ENCODE measurements at regions of chr15 and their contacts with region 1.

Region 1: DNA sequence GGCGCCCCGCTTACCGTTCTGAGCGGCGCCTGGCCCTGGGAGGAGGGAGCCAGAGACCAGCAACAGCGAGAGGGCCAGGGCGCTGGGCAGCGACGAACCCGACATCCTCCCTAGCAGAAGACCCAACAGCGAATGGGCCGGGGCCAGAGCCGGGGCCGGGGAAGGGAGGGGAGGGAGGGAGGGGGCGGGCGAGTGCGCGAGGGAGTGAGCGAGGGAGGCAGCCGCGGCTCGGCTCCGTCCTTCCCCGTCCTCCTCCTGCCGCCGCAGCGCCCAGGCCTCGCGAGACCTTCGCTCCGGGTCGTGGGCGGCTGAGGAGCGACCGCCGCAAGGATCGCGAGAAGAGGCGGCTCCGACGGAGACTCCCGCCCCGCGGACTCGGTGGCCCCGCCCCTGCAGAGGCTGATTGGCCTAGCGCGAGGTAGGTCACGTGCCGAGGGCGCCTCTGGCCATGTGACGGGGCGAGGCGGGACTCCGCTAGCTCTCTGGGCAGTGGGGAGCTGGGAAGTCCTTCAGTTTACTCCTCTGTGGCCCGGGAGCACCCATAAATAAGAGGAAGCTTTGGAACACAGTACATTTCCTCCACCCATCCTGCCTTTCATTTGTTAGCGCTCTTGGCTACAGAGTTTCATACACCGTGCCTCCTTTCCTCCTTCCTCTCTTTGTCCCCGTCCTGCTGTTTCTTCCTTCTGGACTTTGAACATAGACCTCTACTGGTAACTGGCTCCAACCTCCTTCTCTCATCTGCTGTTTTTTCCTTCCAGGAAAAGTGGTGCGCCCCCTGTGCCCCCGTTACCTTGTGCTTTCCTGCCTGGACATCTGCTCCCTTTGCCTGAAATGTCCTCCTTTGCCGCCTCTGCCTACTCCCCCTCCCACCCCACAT is at the start of gene NPTN:
- DNase-seq: peak; percentile 99
- H3K4me3 Mint-ChIP-seq: peak within 1 kb of the TSS; percentile 83
- H3K27ac Mint-ChIP-seq: peak within 1 kb of the TSS; percentile 52
- H3K4me1 Mint-ChIP-seq: peaks cover 47% of the 10 kb centered on the region
- H3K27me3 Mint-ChIP-seq: peaks cover 10% of the 10 kb centered on the region
- total RNA-seq, gene NPTN: 46.7 to 49.8 TPM

Region 2: GRCh38 chr15:73284090-73284716 is 349.1 kb before region 1 on chr15:
- CTCF ChIA-PET with region 1: interaction called, 8 read pairs
- POLR2A ChIA-PET with region 1: no interaction called
- intact Hi-C with region 1: loop called (anchors 10 kb)
- DNase-seq: no peak
- H3K4me3 Mint-ChIP-seq: no peak overlapping the region
- H3K27ac Mint-ChIP-seq: no peak overlapping the region
- H3K4me1 Mint-ChIP-seq: peaks cover 13% of the 10 kb centered on the region
- H3K27me3 Mint-ChIP-seq: no peaks in the 10 kb centered on the region

Region 3: DNA sequence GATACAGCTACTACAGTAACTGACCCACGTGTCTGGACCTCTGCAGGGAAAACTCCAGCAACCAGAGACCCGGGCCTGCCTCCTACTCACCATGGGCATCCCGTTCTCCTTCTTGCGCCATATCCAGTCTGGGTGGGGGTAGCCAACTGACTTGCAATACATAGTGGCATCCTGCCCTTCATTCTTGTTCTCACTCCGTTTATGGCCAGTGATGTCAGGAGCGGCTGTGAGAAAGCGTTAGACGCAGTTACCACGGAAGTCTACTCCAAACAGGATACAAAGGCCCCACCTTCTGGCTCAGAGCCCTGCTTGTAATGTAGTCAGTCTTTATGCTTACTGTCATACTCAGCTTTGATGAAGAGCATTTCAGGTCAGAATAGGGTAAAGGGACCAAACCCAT is 59.8 kb before region 1 on chr15:
- CTCF ChIA-PET with region 1: interaction called, 25 read pairs
- POLR2A ChIA-PET with region 1: no interaction called
- intact Hi-C with region 1: loop called (anchors 1 kb)
- DNase-seq: no peak
- H3K4me3 Mint-ChIP-seq: no peak overlapping the region
- H3K27ac Mint-ChIP-seq: no peak overlapping the region
- H3K4me1 Mint-ChIP-seq: peaks cover 19% of the 10 kb centered on the region
- H3K27me3 Mint-ChIP-seq: no peaks in the 10 kb centered on the region

Region 4: GRCh38 chr15:73617301-73617831 is 16.0 kb before region 1 on chr15:
- CTCF ChIA-PET with region 1: interaction called, 104 read pairs
- POLR2A ChIA-PET with region 1: interaction called, 6 read pairs
- intact Hi-C with region 1: no loop called
- DNase-seq: no peak
- H3K4me3 Mint-ChIP-seq: no peak overlapping the region
- H3K27ac Mint-ChIP-seq: no peak overlapping the region
- H3K4me1 Mint-ChIP-seq: peaks cover 44% of the 10 kb centered on the region
- H3K27me3 Mint-ChIP-seq: no peaks in the 10 kb centered on the region

Region 5: DNA sequence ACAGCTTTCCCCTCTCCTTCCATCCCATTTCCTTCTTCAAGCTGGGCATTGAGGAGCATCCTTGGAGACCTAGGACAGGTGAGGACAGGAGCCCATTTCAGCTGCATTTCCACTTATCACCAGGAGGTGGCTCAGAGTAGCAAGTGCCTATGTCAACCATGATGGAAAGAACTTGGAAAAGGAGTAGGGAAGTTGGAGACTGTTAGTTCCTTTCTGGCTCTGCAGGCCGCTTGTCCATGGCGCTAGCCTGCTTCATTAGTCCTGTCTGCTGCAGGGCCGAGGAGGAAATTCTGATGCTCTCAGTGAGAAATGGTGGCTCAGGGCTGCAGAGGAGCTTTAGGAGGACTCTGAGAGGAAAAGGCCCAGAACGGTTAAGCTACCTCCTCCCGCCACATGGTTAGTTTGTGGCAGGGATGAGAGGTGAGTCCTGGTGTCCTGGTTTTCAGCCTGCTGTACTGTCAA is 43.8 kb after region 1 on chr15:
- CTCF ChIA-PET with region 1: interaction called, 154 read pairs
- POLR2A ChIA-PET with region 1: no interaction called
- intact Hi-C with region 1: loop called (anchors 1 kb)
- DNase-seq: peak; percentile 60
- H3K4me3 Mint-ChIP-seq: no peak overlapping the region
- H3K27ac Mint-ChIP-seq: no peak overlapping the region
- H3K4me1 Mint-ChIP-seq: peaks cover 16% of the 10 kb centered on the region
- H3K27me3 Mint-ChIP-seq: peaks cover 25% of the 10 kb centered on the region

Region 6: DNA sequence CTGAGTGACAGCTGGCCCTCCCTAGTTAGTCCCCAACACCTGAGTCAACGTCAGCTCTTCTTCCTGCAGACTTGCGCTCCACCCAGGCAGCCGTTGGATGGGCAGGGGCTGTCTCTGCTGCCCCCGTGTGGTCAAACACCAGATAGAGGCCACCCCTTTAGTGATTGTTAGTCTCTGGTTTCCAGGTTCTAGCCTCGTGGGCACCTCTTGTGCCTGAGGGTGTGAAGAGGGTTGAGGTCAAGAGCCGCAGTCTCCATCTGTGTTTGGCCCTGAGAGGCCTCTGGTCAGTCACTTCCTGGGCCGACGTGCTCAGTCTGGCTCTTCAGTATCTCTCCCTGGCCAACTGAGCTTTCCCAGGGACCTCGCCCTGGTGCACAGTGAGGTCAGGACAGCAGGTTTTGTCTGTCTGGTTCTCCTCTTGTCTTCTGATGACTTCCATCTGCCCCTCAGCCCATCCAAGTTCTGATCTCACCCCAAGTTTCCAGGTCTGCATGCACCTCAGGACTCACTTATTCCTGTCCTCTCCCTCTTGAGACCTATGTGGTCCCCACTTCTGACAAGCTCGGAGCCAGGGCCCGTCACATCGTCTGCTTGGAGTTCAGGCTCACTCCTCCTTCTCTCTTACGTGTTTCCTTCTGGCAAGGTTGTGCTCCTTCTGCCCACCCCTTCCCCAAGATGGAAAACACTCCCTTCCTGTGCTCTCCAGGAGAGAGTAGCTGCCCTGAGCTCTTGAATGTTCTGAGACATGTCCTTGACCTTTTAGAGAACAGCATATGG is 71.7 kb after region 1 on chr15:
- CTCF ChIA-PET with region 1: interaction called, 437 read pairs
- POLR2A ChIA-PET with region 1: no interaction called
- intact Hi-C with region 1: loop called (anchors 1 kb)
- DNase-seq: peak; percentile 77
- H3K4me3 Mint-ChIP-seq: no peak overlapping the region
- H3K27ac Mint-ChIP-seq: no peak overlapping the region
- H3K4me1 Mint-ChIP-seq: peaks cover 1% of the 10 kb centered on the region
- H3K27me3 Mint-ChIP-seq: peaks cover 4% of the 10 kb centered on the region